HEK293T (cell line): ENCODE measurements at regions of chr11 and their contacts with region 1.

Region 1: GRCh38 chr11:73597956-73598718 is at the start of gene FAM168A:
- DNase-seq: peak; percentile 92

Region 2: DNA sequence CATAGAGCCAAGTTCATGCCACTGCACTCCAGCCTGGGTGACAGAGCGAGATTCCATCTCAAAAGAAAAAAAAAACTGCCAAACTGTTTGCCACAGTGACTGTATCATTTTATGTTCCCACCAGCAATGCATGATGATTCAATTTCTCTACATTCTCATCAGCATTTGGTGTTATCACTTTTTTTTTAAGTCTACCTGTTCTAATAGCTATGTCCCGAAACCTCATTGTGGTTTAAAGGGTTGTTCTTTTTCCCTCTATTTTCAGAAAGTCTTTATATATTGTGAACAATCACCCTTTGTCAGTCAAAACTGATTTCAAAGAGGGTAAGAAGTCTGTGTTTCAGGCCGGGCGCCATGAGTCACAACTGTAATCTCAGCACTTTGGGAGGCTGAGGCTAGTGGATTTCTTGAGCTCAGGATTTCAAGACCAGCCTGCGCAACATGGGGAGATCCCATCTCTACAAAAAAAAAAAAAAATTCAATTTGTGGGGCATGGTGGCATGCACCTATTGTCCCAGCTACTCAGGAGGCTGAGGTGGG is 14.5 kb after region 1 on chr11:
- CTCF ChIA-PET with region 1: no interaction called
- POLR2A ChIA-PET with region 1: interaction called, 12 read pairs
- DNase-seq: no peak